IMR-90 (cell line): ENCODE measurements at regions of chr3 and their contacts with region 1.

Region 1: DNA sequence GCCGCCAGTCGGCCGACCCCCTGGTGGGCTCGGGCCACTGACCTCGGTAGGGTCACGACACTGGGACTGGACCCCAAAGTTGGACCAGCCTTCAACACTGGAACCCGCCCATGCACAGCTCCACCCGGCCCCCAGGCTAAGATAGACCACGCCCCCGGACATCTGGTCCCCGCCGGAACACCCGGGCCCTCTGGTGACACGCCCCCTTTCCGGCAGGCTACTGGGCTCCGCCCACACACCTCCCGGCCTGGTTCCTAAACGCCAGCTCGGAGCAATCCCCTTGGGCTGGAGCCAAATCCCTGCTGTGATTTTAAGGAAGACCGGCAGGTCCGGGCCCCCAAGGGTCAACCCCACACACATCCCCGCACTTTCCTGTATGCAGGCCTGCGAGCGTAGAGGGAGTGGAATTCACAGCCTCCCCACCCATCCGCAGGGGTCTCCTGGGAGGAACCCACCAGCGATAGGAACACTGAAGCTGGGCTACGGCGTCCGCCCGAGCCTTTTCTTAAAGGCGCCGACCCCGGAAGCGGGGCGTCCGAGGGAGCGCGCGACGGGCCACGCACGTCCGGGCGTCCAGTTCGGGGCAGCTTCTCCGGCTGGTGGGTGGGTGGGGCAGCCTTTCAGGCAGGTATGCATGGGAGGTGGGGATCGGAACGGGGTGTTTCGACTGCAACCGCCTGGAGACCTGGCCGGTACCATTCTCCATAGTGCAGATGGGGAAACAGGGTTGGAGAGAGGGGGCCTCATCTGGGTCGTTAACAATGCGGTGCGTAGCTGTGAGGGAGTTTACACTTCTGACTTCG is at the start of gene HEMK1:
- DNase-seq: peak; percentile 91
- ATAC-seq: peak; percentile 81
- H3K4me3 ChIP-seq: peak within 1 kb of the TSS; percentile 78
- H3K27ac ChIP-seq: peak within 1 kb of the TSS; percentile 96
- H3K4me1 ChIP-seq: peaks cover 5% of the 10 kb centered on the region
- H3K27me3 ChIP-seq: no peaks in the 10 kb centered on the region
- CTCF ChIP-seq: no peak
- POLR2A ChIP-seq: peak; percentile 69
- RAD21 ChIP-seq: no peak
- total RNA-seq, gene HEMK1: 12.5 and 17.2 TPM in 2 replicates

Region 2: DNA sequence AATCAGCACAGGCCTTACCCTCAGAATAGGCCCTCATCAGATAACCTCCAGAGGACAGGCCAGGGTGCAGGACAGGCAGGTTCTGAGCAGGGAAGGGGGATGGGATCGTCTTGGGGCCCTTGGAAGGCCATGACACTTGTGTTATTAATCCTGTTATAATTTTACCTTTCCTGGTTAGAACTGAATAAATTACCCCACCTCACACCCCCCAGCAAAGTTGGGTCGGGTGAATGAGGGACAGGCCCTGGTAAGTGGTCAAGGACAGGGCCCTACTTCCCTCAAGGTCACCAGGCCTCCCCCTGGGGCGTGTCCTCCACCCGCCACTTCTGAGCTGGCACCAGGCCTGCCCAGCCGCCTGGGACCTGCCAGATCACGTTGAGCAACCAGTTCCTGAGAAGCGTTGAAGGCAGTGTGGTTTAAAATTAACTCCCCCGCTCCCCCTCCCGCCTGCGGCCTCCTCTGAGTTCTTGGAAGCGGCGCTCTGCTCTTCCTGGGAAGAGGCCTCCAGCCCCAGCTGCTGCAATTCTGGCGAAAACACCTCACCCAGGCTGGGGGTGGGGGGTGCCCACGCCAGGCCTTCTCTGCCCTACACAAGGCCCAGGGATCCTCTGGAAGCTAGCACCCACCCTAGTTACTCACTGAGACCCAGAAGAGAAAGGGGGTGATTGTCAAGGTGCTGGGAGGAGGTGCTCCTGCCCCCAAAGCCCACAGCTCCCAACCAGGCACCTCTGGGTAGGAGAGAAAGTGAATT is 31.9 kb after region 1 on chr3:
- CTCF ChIA-PET with region 1: no interaction called
- POLR2A ChIA-PET with region 1: no interaction called
- dilution Hi-C with region 1: no loop called
- in situ Hi-C with region 1: no loop called
- intact Hi-C with region 1: loop called (anchors 1 kb)
- DNase-seq: peak; percentile 95
- ATAC-seq: peak; percentile 73
- H3K4me3 ChIP-seq: no peak overlapping the region
- H3K27ac ChIP-seq: peak overlapping the region; percentile 97
- H3K4me1 ChIP-seq: peaks cover 22% of the 10 kb centered on the region
- H3K27me3 ChIP-seq: no peaks in the 10 kb centered on the region
- CTCF ChIP-seq: no peak
- POLR2A ChIP-seq: no peak
- RAD21 ChIP-seq: no peak

Region 3: DNA sequence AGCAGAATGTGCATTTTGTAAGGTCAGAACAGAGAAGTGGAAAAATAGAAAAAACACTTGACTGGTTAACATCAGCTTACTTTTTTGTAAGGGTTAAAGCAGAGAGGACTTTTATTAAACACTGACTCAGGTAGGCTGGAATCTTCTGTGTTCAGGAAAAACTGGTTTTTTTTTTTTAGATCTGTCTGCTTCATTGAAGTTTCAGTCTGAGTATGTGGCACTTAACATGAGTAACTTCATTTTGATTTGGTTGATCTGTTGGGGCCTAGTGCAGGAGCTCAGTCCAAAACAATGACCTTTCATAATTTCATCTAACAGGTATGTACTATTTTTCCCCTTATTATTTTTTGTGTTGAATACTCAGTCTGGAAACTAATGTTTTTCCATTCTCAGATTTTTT is 246.7 kb after region 1 on chr3:
- CTCF ChIA-PET with region 1: no interaction called
- POLR2A ChIA-PET with region 1: no interaction called
- dilution Hi-C with region 1: no loop called
- in situ Hi-C with region 1: no loop called
- intact Hi-C with region 1: no loop called
- DNase-seq: no peak
- ATAC-seq: no peak
- H3K4me3 ChIP-seq: no peak overlapping the region
- H3K27ac ChIP-seq: no peak overlapping the region
- H3K4me1 ChIP-seq: no peaks in the 10 kb centered on the region
- H3K27me3 ChIP-seq: no peaks in the 10 kb centered on the region
- CTCF ChIP-seq: no peak
- POLR2A ChIP-seq: no peak
- RAD21 ChIP-seq: no peak

Region 4: GRCh38 chr3:50885070-50885850 is 316.1 kb after region 1 on chr3:
- CTCF ChIA-PET with region 1: no interaction called
- POLR2A ChIA-PET with region 1: no interaction called
- dilution Hi-C with region 1: no loop called
- in situ Hi-C with region 1: no loop called
- intact Hi-C with region 1: no loop called
- DNase-seq: no peak
- ATAC-seq: no peak
- H3K4me3 ChIP-seq: no peak overlapping the region
- H3K27ac ChIP-seq: no peak overlapping the region
- H3K4me1 ChIP-seq: no peaks in the 10 kb centered on the region
- H3K27me3 ChIP-seq: no peaks in the 10 kb centered on the region
- CTCF ChIP-seq: no peak
- POLR2A ChIP-seq: no peak
- RAD21 ChIP-seq: no peak

Region 5: DNA sequence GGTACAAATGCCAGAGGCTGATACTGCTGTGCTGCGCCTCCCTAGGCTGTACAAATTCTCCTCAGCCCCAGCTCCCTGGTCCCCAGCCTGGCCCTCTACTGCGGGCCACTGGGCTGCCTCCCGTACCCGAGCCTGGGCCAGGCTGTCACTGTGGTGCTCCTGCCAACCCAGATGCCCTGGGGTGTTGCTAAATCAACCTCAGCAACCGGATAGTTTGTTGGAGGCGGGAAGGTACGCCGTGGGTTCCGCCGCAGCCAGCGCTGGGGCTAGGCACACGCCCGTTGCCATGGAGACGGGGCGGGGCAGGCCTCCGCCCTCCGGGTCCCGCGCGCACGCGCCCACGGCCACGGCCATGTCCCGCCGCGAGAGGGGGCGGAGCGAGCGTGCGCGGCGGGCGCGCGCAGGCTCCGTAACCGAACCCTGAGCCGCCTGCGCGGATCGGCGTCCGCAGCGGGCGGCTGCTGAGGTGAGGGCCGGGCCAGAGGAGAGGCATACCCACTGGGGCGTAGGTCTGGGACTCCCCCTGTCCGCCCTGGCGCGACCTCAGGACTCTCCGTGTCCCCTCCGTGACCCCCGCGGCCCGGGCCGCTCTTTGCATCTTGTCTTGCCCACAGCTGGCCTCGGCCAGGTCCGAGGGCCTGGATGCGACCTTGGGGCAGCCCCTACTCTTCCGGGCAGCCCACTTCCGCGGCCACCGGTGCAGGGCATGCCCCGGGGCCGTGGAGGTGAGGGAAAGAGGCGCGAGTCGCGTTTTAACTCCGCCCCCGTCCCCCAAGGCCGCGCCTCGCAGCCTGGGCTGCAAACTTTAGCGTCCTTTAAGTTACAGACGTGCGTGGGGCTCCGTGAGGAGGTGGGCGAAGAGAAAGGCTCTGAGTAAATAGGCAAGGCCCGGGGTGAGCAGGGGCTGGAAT is 1101.9 kb after region 1 on chr3 and contains the start of gene TEX264:
- CTCF ChIA-PET with region 1: no interaction called
- POLR2A ChIA-PET with region 1: no interaction called
- dilution Hi-C with region 1: no loop called
- in situ Hi-C with region 1: no loop called
- intact Hi-C with region 1: loop called (anchors 5 kb)
- DNase-seq: peak; percentile 71
- ATAC-seq: peak; percentile 82
- H3K4me3 ChIP-seq: peak within 1 kb of the TSS; percentile 87
- H3K27ac ChIP-seq: peak within 1 kb of the TSS; percentile 79
- H3K4me1 ChIP-seq: peaks cover 12% of the 10 kb centered on the region
- H3K27me3 ChIP-seq: no peaks in the 10 kb centered on the region
- CTCF ChIP-seq: no peak
- POLR2A ChIP-seq: peak; percentile 55; the same call in 1 of the 2 replicates
- RAD21 ChIP-seq: no peak
- total RNA-seq, gene TEX264: 26.9 and 30.3 TPM in 2 replicates